Heart left ventricle (tissue), 16 donors: ENCODE measurements at regions of chr5 and their contacts with region 1.

Region 1: DNA sequence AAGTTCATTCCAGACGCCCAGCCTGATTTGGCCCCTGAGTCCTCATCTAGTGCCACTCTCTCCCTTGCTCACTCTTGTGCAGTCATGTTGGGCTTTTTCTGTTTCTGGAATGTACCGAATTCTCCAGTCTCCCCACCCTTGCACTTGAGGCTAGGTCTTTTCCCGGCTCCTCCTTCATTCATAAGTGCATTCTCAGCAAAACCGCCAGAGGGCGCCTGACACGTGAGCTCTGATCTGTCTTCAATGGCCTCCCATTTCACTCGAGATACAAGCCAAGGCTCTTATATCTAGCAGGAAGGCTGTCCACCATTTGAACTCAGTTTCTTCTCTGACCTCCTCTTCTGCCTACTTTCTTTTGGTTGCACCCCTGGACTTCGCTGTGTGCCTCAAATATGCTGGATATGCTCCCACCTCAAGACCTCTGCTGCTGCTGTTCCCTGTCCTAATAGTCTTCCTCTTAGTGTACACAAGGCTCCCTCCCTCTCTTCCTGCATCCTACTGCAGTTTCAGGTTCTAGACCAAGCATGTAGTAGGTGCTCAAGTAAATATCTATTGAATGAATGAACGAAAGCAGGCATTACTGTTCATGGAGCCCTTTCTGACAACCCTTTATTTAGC is 568.1 kb upstream of the WWC1 start:
- DNase-seq: peak; percentile 60 to 73 (median 63)
- ATAC-seq: peak; percentile 78 to 95 (median 89)
- H3K4me3 ChIP-seq: no peak overlapping the region
- H3K27ac ChIP-seq: no peak overlapping the region
- H3K4me1 ChIP-seq: no peaks in the 10 kb centered on the region
- H3K27me3 ChIP-seq: no peaks in the 10 kb centered on the region
- CTCF ChIP-seq: peak; percentile 79 to 94 (median 86)
- POLR2A ChIP-seq: no peak

Region 2: GRCh38 chr5:167671176-167671575 is 52.2 kb before region 1 on chr5:
- intact Hi-C with region 1: no loop called
- DNase-seq: no peak
- ATAC-seq: no peak
- H3K4me3 ChIP-seq: no peak overlapping the region
- H3K27ac ChIP-seq: no peak overlapping the region
- H3K4me1 ChIP-seq: no peaks in the 10 kb centered on the region
- H3K27me3 ChIP-seq: no peaks in the 10 kb centered on the region
- CTCF ChIP-seq: no peak
- POLR2A ChIP-seq: no peak

Region 3: GRCh38 chr5:167783145-167783817 is 59.9 kb after region 1 on chr5:
- intact Hi-C with region 1: no loop called
- DNase-seq: peak in 1 of 5 donors; percentile 20
- ATAC-seq: peak in 1 of 4 donors; percentile 63
- H3K4me3 ChIP-seq: no peak overlapping the region
- H3K27ac ChIP-seq: no peak overlapping the region
- H3K4me1 ChIP-seq: peaks cover 0 to 22% (median 0%) of the 10 kb centered on the region in 12 donors
- H3K27me3 ChIP-seq: no peaks in the 10 kb centered on the region
- CTCF ChIP-seq: no peak
- POLR2A ChIP-seq: no peak

Region 4: DNA sequence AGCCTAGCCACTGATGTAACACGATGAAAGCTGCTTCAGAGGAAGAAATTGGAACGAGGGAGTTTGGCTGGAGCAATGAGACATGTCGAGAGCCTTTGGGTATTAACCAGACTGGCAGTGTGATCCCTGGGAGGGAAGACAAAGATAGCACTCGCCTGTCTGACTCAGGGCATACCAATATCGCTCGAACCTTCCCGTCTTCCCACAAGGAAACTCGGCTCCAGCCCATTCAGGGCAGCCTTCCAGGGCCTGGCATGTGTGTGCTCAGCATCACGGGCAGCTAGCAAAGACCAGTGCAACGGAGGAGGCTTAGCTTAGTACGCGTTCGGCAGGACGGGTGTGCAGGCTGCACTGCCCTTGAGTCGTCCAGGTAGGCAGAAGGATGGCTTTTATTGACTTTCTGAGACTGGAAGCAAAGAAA is 211.2 kb after region 1 on chr5:
- intact Hi-C with region 1: loop called in 5 of 10 experiments (anchors 5 to 10 kb)
- DNase-seq: peak; percentile 80 to 93 (median 83)
- ATAC-seq: peak; percentile 93 to 95 (median 94)
- H3K4me3 ChIP-seq: peak overlapping the region; percentile 32 to 68 (median 54)
- H3K27ac ChIP-seq: peak overlapping the region; percentile 62 to 95 (median 84)
- H3K4me1 ChIP-seq: peaks cover 0 to 9% (median 0%) of the 10 kb centered on the region in 12 donors
- H3K27me3 ChIP-seq: no peaks in the 10 kb centered on the region
- CTCF ChIP-seq: no peak
- POLR2A ChIP-seq: peak in 1 of 2 donors; percentile 65

Region 5: GRCh38 chr5:168020542-168021294 is 297.4 kb after region 1 on chr5:
- intact Hi-C with region 1: loop called in 6 of 10 experiments (anchors 2 to 10 kb)
- DNase-seq: peak in 1 of 5 donors; percentile 38
- ATAC-seq: peak in 2 of 4 donors; percentile 27 to 54
- H3K4me3 ChIP-seq: no peak overlapping the region
- H3K27ac ChIP-seq: peak overlapping the region in 9 of 12 donors; percentile 25 to 75 (median 61)
- H3K4me1 ChIP-seq: peaks cover 0 to 63% (median 15%) of the 10 kb centered on the region in 12 donors
- H3K27me3 ChIP-seq: no peaks in the 10 kb centered on the region
- CTCF ChIP-seq: peak in 9 of 12 donors; percentile 8 to 47 (median 29)
- POLR2A ChIP-seq: no peak

Region 6: DNA sequence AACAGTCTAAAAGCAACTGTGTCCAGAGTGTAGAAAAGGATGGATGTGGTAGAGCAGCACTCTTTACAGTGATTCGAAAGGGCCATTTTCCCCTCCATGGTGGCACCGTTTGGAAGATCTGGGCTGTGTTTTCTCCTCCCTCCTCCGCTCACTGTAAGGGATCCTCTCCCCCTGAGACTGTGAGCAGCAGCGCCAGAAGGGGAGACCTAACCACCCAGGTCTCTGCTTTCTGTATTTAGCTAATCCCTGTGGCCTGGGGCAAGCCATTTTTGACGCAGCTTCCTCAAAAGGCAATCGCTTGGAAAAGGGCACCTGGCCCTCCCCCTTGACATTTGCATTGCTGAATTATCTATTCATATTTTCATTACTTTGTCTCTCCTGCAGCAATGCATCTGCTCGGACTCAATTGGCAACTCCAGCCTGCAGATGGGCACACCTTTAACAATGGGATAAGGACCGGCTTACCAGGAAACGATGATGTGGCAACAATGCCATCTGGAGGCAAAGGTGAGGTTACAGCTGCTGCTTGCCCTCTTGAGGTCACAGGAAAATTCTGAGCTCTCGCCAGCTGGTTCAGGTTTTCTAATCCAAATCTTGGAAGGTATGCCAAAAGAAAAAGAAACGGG is 323.8 kb after region 1 on chr5:
- intact Hi-C with region 1: loop called in 2 of 10 experiments (anchors 10 kb)
- DNase-seq: peak in 2 of 5 donors; percentile 44 to 60
- ATAC-seq: peak; percentile 75 to 83 (median 78)
- H3K4me3 ChIP-seq: no peak overlapping the region
- H3K27ac ChIP-seq: peak overlapping the region in 6 of 12 donors; percentile 1 to 43 (median 36)
- H3K4me1 ChIP-seq: peaks cover 0 to 22% (median 4%) of the 10 kb centered on the region in 12 donors
- H3K27me3 ChIP-seq: no peaks in the 10 kb centered on the region
- CTCF ChIP-seq: peak in 10 of 12 donors; percentile 10 to 57 (median 38)
- POLR2A ChIP-seq: no peak